HCT116 (cell line): ENCODE measurements at regions of chr16 and their contacts with region 1.

Region 1: DNA sequence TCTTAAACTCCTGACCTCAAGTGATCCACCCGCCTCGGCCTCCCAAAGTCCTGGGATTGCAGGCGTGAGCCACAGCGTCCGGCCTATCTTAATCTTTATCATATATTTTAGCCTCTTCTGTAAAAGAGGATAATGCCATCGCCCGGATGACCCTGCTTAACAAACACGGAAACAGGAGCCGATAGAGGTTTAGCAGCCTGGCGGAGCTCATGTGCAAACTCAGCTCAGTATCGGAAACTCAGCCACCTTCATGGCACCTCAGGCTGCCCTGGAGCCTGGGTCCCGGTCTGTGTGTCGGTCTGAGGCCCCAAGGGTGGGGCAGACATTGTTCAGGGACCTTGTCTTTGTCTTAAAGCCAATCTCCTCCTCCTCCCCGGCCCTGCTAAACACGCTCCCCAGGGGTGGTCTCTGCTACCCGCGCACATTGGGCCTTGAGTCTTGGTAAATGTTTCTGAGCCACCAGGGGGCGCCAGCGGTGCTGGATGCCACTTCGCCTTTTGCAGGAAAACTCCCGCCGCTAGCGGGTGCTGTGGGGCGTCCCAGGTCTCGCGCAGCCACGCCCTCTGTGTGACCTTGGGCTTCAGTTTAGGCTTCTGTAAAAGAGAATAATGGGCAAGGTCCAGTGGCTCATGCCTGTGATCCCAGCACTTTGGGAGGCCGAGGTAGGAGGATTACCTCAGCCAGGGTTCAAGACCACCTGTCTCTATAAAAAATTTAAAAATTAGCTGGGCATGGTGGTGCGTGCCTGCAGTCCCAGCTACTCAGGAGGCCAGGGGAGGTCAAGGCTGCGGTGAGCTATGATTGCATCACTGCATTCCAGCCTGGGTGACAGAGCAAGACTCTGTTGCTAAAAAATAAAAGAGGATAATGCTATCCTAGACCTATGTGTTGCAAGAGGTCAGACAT is 2.7 kb downstream of the CETP start:
- DNase-seq: peak; percentile 79
- ATAC-seq: peak; percentile 91
- H3K4me3 ChIP-seq: no peak overlapping the region
- H3K27ac ChIP-seq: no peak overlapping the region
- H3K4me1 ChIP-seq: peaks cover 7 to 15% of the 10 kb centered on the region in 2 experiments; a peak in 3 of 4 replicates
- H3K27me3 ChIP-seq: no peaks in the 10 kb centered on the region
- CTCF ChIP-seq: peak; percentile 99 to 100 (median 100)
- POLR2A ChIP-seq: no peak
- RAD21 ChIP-seq: peak; percentile 93

Region 2: GRCh38 chr16:56911771-56912571 is 52.5 kb before region 1 on chr16:
- CTCF ChIA-PET with region 1: no interaction called
- POLR2A ChIA-PET with region 1: no interaction called
- RAD21 ChIA-PET with region 1: no interaction called
- intact Hi-C with region 1: no loop called
- DNase-seq: no peak
- ATAC-seq: no peak
- H3K4me3 ChIP-seq: no peak overlapping the region
- H3K27ac ChIP-seq: no peak overlapping the region
- H3K4me1 ChIP-seq: no peaks in the 10 kb centered on the region
- H3K27me3 ChIP-seq: no peaks in the 10 kb centered on the region
- CTCF ChIP-seq: no peak
- POLR2A ChIP-seq: no peak
- RAD21 ChIP-seq: no peak

Region 3: GRCh38 chr16:56977216-56977615 is 12.7 kb after region 1 on chr16:
- CTCF ChIA-PET with region 1: interaction called, 12 read pairs
- POLR2A ChIA-PET with region 1: no interaction called
- RAD21 ChIA-PET with region 1: no interaction called
- intact Hi-C with region 1: no loop called
- DNase-seq: no peak
- ATAC-seq: no peak
- H3K4me3 ChIP-seq: no peak overlapping the region
- H3K27ac ChIP-seq: no peak overlapping the region
- H3K4me1 ChIP-seq: no peaks in the 10 kb centered on the region
- H3K27me3 ChIP-seq: no peaks in the 10 kb centered on the region
- CTCF ChIP-seq: no peak
- POLR2A ChIP-seq: no peak
- RAD21 ChIP-seq: no peak

Region 4: GRCh38 chr16:56985288-56985961 is 20.9 kb after region 1 on chr16:
- CTCF ChIA-PET with region 1: interaction called, 10 read pairs
- POLR2A ChIA-PET with region 1: interaction called, 3 read pairs
- RAD21 ChIA-PET with region 1: interaction called in 1 of 2 experiments, 4 read pairs
- intact Hi-C with region 1: no loop called
- DNase-seq: peak; percentile 62
- ATAC-seq: peak; percentile 77
- H3K4me3 ChIP-seq: peak overlapping the region in 1 of 2 experiments; percentile 12; a peak in 1 of 4 replicates
- H3K27ac ChIP-seq: peak overlapping the region; percentile 49
- H3K4me1 ChIP-seq: peaks cover 29 to 48% of the 10 kb centered on the region in 2 experiments
- H3K27me3 ChIP-seq: no peaks in the 10 kb centered on the region
- CTCF ChIP-seq: no peak
- POLR2A ChIP-seq: no peak
- RAD21 ChIP-seq: no peak

Region 5: GRCh38 chr16:57034896-57035295 is 70.4 kb after region 1 on chr16:
- CTCF ChIA-PET with region 1: no interaction called
- POLR2A ChIA-PET with region 1: no interaction called
- RAD21 ChIA-PET with region 1: no interaction called
- intact Hi-C with region 1: no loop called
- DNase-seq: no peak
- ATAC-seq: no peak
- H3K4me3 ChIP-seq: no peak overlapping the region
- H3K27ac ChIP-seq: no peak overlapping the region
- H3K4me1 ChIP-seq: no peaks in the 10 kb centered on the region
- H3K27me3 ChIP-seq: no peaks in the 10 kb centered on the region
- CTCF ChIP-seq: no peak
- POLR2A ChIP-seq: no peak
- RAD21 ChIP-seq: no peak

Region 6: DNA sequence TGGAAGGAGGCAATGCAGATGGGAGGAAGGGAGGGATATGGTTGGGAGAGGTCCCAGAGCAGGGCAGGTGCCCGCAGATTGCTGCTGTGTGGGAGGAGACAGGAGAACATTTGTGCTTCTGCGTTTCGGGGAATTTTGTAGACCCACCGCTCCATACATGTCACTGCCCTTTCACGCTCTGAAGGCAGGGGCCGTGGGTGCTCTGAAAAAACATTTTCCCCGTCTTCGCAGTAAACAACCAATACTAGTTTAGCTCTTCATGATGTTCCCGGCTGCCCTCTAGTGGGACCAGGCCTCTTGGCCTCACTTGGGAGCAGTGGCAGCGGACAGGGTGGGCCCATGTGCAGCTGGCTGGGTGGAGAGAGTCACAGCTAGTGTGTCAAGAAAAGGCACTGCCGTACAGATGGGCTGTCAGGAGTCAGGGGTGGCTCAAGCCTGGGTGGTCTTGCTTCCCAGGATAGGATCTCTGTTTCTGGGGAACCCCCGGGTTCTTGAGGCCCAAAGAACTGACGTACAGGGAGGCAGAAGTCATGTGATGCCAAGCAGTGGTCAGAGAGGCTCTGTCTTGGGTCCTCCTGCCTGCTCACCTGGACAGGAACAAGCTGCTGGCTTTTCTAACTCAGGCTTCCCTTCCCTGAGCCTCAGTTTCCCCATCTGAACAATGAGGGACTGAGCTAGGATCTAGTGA is 81.3 kb after region 1 on chr16:
- CTCF ChIA-PET with region 1: interaction called, 26 read pairs
- POLR2A ChIA-PET with region 1: no interaction called
- RAD21 ChIA-PET with region 1: interaction called, 8 to 11 read pairs
- intact Hi-C with region 1: loop called (anchors 1 kb)
- DNase-seq: peak; percentile 21
- ATAC-seq: peak; percentile 97
- H3K4me3 ChIP-seq: no peak overlapping the region
- H3K27ac ChIP-seq: no peak overlapping the region
- H3K4me1 ChIP-seq: peaks cover 3 to 6% of the 10 kb centered on the region in 2 experiments; a peak in 2 of 4 replicates
- H3K27me3 ChIP-seq: no peaks in the 10 kb centered on the region
- CTCF ChIP-seq: peak; percentile 54 to 94 (median 64)
- POLR2A ChIP-seq: no peak
- RAD21 ChIP-seq: peak; percentile 72

Region 7: GRCh38 chr16:57167953-57168352 is 203.5 kb after region 1 on chr16:
- CTCF ChIA-PET with region 1: no interaction called
- POLR2A ChIA-PET with region 1: no interaction called
- RAD21 ChIA-PET with region 1: no interaction called
- intact Hi-C with region 1: loop called (anchors 1 kb)
- DNase-seq: peak; percentile 36
- ATAC-seq: peak; percentile 73
- H3K4me3 ChIP-seq: no peak overlapping the region
- H3K27ac ChIP-seq: no peak overlapping the region
- H3K4me1 ChIP-seq: no peaks in the 10 kb centered on the region
- H3K27me3 ChIP-seq: no peaks in the 10 kb centered on the region
- CTCF ChIP-seq: peak; percentile 44 to 82 (median 64); a peak in 5 of 6 replicates
- POLR2A ChIP-seq: no peak
- RAD21 ChIP-seq: peak; percentile 81